ENCODE measurements at regions of chr13 and their contacts with region 1.

Region 1: GRCh38 chr13:29771247-29771646 is 79.2 kb downstream of the UBL3 start:
- DNase-seq: no peak
- H3K4me3 Mint-ChIP-seq: no peak overlapping the region
- H3K27ac Mint-ChIP-seq: no peak overlapping the region
- H3K4me1 Mint-ChIP-seq: no peaks in the 10 kb centered on the region
- H3K27me3 Mint-ChIP-seq: no peaks in the 10 kb centered on the region
- CTCF ChIP-seq: no peak

Region 2: DNA sequence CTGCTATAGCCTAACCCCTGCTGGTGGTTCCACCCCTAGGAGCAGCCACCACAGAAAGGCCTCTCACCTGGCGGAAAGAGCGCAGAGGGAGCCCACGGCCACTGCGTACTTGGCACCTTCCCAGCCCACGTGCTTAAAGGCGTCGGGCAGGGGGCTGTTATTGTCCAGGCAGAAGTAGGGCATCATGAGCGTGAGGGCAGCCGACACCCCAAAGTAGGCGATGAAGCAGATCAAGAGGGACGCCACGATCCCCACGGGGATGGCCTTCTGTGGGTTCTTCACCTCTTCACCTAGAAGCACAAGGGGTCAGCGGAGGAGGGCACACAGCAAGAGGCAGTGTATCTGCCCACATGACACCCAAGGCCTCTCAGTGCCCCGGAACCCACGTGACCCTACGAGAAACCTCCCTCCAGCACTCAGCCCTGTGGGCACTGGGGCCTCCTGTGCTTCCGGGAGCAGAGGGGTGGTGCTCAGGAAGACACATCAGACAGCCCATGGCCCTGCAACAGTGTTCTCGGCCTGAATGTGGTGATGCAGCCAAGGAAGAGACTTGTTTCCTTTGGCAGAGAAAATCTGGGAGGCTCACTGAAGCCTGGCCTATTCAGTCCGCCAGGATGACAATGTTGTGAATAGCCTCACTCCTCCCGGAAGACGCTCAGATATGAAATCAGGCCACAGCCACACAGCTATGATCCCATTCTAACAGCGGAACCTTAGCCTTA is 247.9 kb before region 1 on chr13:
- CTCF ChIA-PET with region 1: no interaction called
- intact Hi-C with region 1: no loop called
- DNase-seq: no peak
- H3K4me3 Mint-ChIP-seq: no peak overlapping the region
- H3K27ac Mint-ChIP-seq: no peak overlapping the region
- H3K4me1 Mint-ChIP-seq: no peaks in the 10 kb centered on the region
- H3K27me3 Mint-ChIP-seq: no peaks in the 10 kb centered on the region
- CTCF ChIP-seq: no peak

Region 3: DNA sequence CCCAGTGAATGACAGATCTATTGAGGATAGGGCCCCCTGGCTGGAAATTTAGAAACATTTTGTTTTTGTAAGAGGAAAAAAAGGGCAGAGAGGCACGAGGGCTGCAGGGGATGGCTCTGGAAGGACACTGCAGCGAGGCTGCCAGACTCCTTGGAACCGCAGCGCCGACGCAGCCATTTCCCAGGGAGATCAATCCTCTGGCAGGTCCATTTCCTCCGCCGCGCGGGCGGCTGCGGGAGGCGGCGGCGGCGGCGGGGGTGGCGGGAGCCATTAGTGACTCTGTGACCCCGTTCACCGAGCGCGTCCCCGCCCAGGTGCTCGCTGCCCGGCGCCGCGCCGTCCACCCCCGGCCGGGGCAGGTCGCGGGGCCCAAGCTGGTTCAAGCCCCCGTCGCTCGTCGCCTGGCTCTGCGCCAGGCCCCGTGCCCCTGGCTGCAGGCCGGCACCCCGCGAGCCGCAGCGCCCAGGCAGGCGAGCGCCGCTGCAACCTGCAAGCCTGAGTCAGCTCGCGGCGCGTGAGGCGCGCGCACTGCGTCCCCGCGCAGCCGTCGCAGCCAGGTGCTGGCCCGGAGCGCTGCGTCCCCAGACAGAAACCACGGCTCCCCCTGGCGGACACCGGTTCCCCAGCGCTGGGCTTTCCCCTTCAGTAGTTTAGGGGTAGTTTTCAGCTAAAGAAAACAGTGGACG is 343.5 kb after region 1 on chr13:
- CTCF ChIA-PET with region 1: interaction called, 67 read pairs
- intact Hi-C with region 1: loop called (anchors 1 kb)
- DNase-seq: peak; percentile 92
- H3K4me3 Mint-ChIP-seq: peak overlapping the region; percentile 73
- H3K27ac Mint-ChIP-seq: peak overlapping the region; percentile 66
- H3K4me1 Mint-ChIP-seq: peaks cover 27% of the 10 kb centered on the region
- H3K27me3 Mint-ChIP-seq: no peaks in the 10 kb centered on the region
- CTCF ChIP-seq: peak; percentile 84